ENCODE measurements at regions of chr7 and their contacts with region 1.

Region 1: DNA sequence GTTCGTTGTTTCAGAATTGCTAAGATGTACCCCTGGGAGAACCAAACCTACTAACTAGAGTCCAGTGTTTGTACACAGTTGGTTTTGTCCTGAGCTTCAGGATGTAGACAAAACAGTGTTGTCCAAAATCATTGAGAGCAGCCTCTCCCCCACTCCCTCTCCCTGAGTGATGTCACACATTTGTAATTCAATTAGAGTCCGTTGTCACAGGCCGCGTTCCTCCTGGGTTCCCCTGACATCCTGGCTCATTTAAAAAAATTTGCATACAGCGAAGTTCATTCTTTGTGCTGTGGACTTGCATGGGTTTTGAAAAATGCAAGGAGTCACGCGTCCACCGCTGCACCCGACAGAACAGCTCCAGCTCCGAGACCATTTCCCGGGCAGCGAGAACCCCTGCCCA is 10.3 kb downstream of the GRIFIN start:
- DNase-seq: no peak
- ATAC-seq: no peak
- H3K4me3 ChIP-seq: no peak overlapping the region
- H3K27ac ChIP-seq: no peak overlapping the region
- H3K4me1 ChIP-seq: no peaks in the 10 kb centered on the region; the same call in 1 of the 2 replicates
- H3K27me3 ChIP-seq: no peaks in the 10 kb centered on the region
- CTCF ChIP-seq: no peak

Region 2: DNA sequence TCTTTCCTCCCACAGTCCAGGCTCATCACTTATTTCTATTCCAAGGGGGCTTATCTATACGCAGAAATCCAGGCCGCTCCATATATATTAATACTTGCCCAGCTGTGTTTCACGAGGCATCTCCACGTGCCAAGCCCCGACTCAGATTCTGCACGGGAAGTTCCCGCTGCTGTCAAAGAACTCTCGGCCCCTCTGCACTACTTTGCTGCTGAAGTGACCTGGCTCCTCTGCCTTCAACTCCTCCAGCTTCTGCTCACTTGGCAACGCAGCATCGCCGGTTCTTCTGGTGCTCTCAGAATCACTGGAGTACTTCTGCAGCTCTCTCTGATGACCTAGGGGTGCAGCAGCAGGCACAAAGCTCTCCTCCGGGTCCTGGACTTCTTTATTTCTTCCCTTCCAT is 72.2 kb before region 1 on chr7:
- CTCF ChIA-PET with region 1: interaction called, 18 read pairs
- POLR2A ChIA-PET with region 1: no interaction called
- in situ Hi-C with region 1: no loop called
- intact Hi-C with region 1: no loop called
- DNase-seq: no peak
- ATAC-seq: no peak
- H3K4me3 ChIP-seq: no peak overlapping the region
- H3K27ac ChIP-seq: no peak overlapping the region
- H3K4me1 ChIP-seq: no peaks in the 10 kb centered on the region
- H3K27me3 ChIP-seq: no peaks in the 10 kb centered on the region
- CTCF ChIP-seq: no peak

Region 3: GRCh38 chr7:2501947-2502646 is 36.2 kb after region 1 on chr7:
- CTCF ChIA-PET with region 1: interaction called, 12 read pairs
- POLR2A ChIA-PET with region 1: no interaction called
- in situ Hi-C with region 1: no loop called
- intact Hi-C with region 1: no loop called
- DNase-seq: no peak
- ATAC-seq: no peak; the same call in 1 of the 2 replicates
- H3K4me3 ChIP-seq: no peak overlapping the region
- H3K27ac ChIP-seq: no peak overlapping the region
- H3K4me1 ChIP-seq: peaks cover 16% of the 10 kb centered on the region
- H3K27me3 ChIP-seq: no peaks in the 10 kb centered on the region
- CTCF ChIP-seq: no peak

Region 4: GRCh38 chr7:2530071-2530967 is 64.4 kb after region 1 on chr7:
- CTCF ChIA-PET with region 1: interaction called, 10 read pairs
- POLR2A ChIA-PET with region 1: no interaction called
- in situ Hi-C with region 1: no loop called
- intact Hi-C with region 1: no loop called
- DNase-seq: no peak
- ATAC-seq: 0 out of 2 replicates have a peak, but pooled peaks have one; percentile 1
- H3K4me3 ChIP-seq: no peak overlapping the region
- H3K27ac ChIP-seq: peak overlapping the region; percentile 85
- H3K4me1 ChIP-seq: peaks cover 58% of the 10 kb centered on the region
- H3K27me3 ChIP-seq: no peaks in the 10 kb centered on the region
- CTCF ChIP-seq: no peak